ENCODE measurements at regions of chr16 and their contacts with region 1.

Region 1: DNA sequence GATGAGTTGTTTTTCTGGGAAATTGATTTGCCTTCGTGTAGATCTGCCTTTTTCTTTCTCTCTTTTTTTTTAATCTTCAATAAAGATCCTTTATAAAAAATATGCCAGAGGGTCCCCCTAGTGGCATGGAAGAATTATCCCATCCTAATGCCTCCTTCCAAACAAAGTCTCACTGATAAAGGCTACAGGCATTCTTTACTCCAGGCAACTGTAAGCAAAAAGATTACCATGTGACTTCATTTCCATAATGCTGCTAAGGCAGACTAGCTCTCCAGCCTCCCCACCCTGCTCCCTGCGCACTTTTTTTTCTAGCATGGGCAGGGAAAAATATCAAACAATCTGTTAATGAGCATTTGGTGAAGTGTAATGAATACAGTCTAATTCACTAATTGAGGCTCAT is 220.2 kb upstream of the CDH8 start:
- DNase-seq: peak; percentile 7
- H3K4me3 ChIP-seq: no peak overlapping the region
- H3K27ac ChIP-seq: no peak overlapping the region
- H3K4me1 ChIP-seq: peaks cover 9 to 10% of the 10 kb centered on the region in 2 experiments; a peak in 3 of 4 replicates
- H3K27me3 ChIP-seq: no peaks in the 10 kb centered on the region
- CTCF ChIP-seq: peak; percentile 60
- EP300 ChIP-seq: no peak
- RAD21 ChIP-seq: peak; percentile 58; the same call in 1 of the 2 replicates

Region 2: DNA sequence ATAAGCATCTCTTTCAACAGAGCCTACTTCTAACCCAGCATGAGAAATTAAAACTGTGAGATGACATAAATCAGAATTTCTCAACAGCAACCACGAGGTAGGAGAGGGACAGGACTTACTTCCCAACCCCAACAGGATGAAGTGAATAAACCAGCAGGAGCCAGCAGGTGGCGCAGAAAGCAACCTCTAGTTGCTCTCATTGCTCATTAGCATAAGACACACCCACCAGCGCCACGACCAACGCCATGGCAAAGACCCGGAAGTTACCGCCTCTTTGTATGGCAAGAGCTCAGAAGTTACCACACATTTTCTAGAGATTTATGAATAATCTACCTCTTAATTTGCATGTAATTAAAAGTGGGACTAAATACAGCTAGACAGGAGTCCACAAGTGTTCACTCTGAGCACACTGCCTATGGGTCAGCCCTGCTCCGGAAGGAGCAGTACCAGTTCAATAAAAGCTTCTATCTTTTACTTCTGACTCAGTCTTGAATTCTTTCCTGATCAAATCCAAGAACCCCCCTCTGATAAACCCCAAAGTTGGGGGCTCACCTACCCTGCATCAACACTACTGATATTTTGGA is 30.6 kb before region 1 on chr16:
- CTCF ChIA-PET with region 1: interaction called, 18 read pairs
- POLR2A ChIA-PET with region 1: no interaction called
- DNase-seq: peak; percentile 25
- H3K4me3 ChIP-seq: no peak overlapping the region
- H3K27ac ChIP-seq: no peak overlapping the region
- H3K4me1 ChIP-seq: no peaks in the 10 kb centered on the region
- H3K27me3 ChIP-seq: no peaks in the 10 kb centered on the region
- CTCF ChIP-seq: peak; percentile 64
- EP300 ChIP-seq: no peak
- RAD21 ChIP-seq: peak; percentile 58

Measured in SK-N-SH (cell line).